Activated CD4-positive, alpha-beta T cell treated with anti-CD3 and anti-CD28 coated beads for 36 hours (primary cell): ENCODE measurements at regions of chr10 and their contacts with region 1.

Region 1: GRCh38 chr10:70815504-70816219 is at the start of gene SGPL1:
- DNase-seq: peak; percentile 92
- ATAC-seq: peak; percentile 82
- H3K4me3 Mint-ChIP-seq: peak within 1 kb of the TSS; percentile 83
- H3K27ac Mint-ChIP-seq: peak within 1 kb of the TSS; percentile 84
- H3K4me1 Mint-ChIP-seq: peaks cover 38% of the 10 kb centered on the region
- H3K27me3 Mint-ChIP-seq: no peaks in the 10 kb centered on the region
- total RNA-seq, gene SGPL1: 33.7 to 48.7 TPM

Region 2: DNA sequence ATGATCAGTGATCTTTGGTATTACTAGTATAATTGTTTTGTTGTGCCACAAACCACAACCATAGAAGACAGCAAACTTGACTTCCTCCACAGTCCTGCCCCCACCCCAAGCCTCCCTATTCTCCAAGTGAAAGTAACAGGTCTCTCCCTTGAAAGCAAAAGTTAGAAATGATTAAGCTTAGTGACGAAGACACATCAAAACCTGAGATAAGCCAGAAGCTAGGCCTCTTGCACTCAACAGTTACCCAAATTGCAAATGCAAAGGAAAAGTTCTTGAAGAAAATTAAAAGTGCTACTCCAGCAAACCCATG is 652.8 kb before region 1 on chr10:
- CTCF ChIA-PET with region 1: no interaction called
- POLR2A ChIA-PET with region 1: no interaction called
- intact Hi-C with region 1: loop called in 1 of 2 experiments (anchors 5 kb)
- DNase-seq: peak; percentile 84
- ATAC-seq: peak; percentile 87
- H3K4me3 Mint-ChIP-seq: peak overlapping the region; percentile 60
- H3K27ac Mint-ChIP-seq: peak overlapping the region; percentile 90
- H3K4me1 Mint-ChIP-seq: peaks cover 74% of the 10 kb centered on the region
- H3K27me3 Mint-ChIP-seq: no peaks in the 10 kb centered on the region

Region 3: GRCh38 chr10:70478191-70479164 is 337.2 kb before region 1 on chr10 and contains the start of gene PALD1:
- CTCF ChIA-PET with region 1: no interaction called
- POLR2A ChIA-PET with region 1: no interaction called
- intact Hi-C with region 1: loop called in 1 of 2 experiments (anchors 5 kb)
- DNase-seq: peak; percentile 76
- ATAC-seq: peak; percentile 45
- H3K4me3 Mint-ChIP-seq: peak within 1 kb of the TSS; percentile 70
- H3K27ac Mint-ChIP-seq: peak within 1 kb of the TSS; percentile 67
- H3K4me1 Mint-ChIP-seq: peaks cover 41% of the 10 kb centered on the region
- H3K27me3 Mint-ChIP-seq: peaks cover 19% of the 10 kb centered on the region
- total RNA-seq, gene PALD1: 5.4 to 6.7 TPM

Region 4: GRCh38 chr10:70729763-70730352 is 85.8 kb before region 1 on chr10:
- CTCF ChIA-PET with region 1: no interaction called
- POLR2A ChIA-PET with region 1: no interaction called
- intact Hi-C with region 1: no loop called
- DNase-seq: no peak
- ATAC-seq: no peak
- H3K4me3 Mint-ChIP-seq: no peak overlapping the region
- H3K27ac Mint-ChIP-seq: no peak overlapping the region
- H3K4me1 Mint-ChIP-seq: no peaks in the 10 kb centered on the region
- H3K27me3 Mint-ChIP-seq: no peaks in the 10 kb centered on the region

Region 5: DNA sequence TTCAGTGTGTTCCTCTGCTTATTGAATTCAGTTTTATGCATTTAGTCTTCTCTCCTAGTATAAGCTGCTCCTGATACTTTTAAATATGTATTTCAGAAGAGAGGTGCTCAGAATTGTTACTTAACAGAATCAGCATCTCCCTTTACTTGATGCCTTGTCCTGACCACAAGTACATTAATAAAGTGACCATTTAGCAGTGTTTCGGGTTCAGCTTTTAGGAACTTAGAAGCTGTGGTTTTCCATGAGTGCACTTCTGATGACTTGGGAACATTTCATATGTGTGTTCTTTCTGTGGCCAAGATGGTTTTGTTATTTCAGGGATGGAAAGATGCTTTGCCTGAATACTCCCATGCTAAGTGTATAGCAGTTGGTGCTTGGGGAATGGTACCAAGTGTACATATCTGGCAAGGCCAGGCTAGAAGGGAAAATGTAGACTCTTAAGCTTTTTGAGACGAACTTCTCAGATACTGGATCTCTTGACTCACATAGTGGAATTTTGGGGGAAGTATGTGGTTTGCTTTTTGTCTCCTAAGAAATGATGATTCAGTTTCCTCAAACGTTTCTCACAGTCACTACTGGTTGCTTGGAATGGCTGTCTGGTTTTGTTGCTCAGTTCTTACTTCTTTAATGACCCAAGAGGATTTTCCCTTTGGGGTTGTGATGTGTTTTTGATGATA is 17.3 kb after region 1 on chr10:
- CTCF ChIA-PET with region 1: interaction called, 74 read pairs
- POLR2A ChIA-PET with region 1: interaction called, 12 read pairs
- intact Hi-C with region 1: no loop called
- DNase-seq: no peak
- ATAC-seq: peak; percentile 74
- H3K4me3 Mint-ChIP-seq: peak overlapping the region; percentile 20
- H3K27ac Mint-ChIP-seq: peak overlapping the region; percentile 88
- H3K4me1 Mint-ChIP-seq: peaks cover 89% of the 10 kb centered on the region
- H3K27me3 Mint-ChIP-seq: no peaks in the 10 kb centered on the region

Region 6: GRCh38 chr10:70887804-70888800 is 72.4 kb after region 1 on chr10 and contains the start of gene PCBD1:
- CTCF ChIA-PET with region 1: no interaction called
- POLR2A ChIA-PET with region 1: no interaction called
- intact Hi-C with region 1: loop called in 1 of 2 experiments (anchors 2 kb)
- DNase-seq: peak; percentile 84
- ATAC-seq: peak; percentile 84
- H3K4me3 Mint-ChIP-seq: peak within 1 kb of the TSS; percentile 73
- H3K27ac Mint-ChIP-seq: peak within 1 kb of the TSS; percentile 85
- H3K4me1 Mint-ChIP-seq: peaks cover 26% of the 10 kb centered on the region
- H3K27me3 Mint-ChIP-seq: no peaks in the 10 kb centered on the region
- total RNA-seq, gene PCBD1: 40.1 to 47.6 TPM